ENCODE measurements at regions of chr3 and their contacts with region 1.

Region 1: DNA sequence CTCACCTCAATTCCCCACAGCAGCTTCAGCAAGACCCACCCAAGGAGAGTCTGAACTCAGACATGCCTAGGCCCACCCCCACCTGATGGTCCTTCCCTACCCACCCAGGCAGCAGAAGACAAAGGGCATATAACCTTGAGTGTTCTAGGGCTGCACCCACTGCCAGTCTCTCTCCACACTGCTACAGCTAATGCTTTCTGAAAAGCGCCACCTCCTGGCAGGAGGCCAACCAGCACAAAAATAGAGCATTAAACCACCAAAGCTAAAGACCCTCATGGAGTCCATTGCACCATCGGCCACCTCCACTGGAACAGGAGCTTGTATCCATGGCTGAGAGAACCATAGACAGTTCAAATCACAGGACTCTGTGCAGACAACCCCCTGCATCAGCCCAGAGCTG is 11.3 kb upstream of the RPL39L start:
- DNase-seq: no peak
- ATAC-seq: peak; percentile 82
- H3K4me3 ChIP-seq: no peak overlapping the region
- H3K27ac ChIP-seq: no peak overlapping the region
- H3K4me1 ChIP-seq: no peaks in the 10 kb centered on the region; the same call in 1 of the 2 replicates
- H3K27me3 ChIP-seq: no peaks in the 10 kb centered on the region; a peak in 1 of 4 replicates
- CTCF ChIP-seq: peak; percentile 41 to 45 (median 43); a peak in 5 of 6 replicates
- EP300 ChIP-seq: no peak
- POLR2A ChIP-seq: no peak
- RAD21 ChIP-seq: peak; percentile 50

Region 2: DNA sequence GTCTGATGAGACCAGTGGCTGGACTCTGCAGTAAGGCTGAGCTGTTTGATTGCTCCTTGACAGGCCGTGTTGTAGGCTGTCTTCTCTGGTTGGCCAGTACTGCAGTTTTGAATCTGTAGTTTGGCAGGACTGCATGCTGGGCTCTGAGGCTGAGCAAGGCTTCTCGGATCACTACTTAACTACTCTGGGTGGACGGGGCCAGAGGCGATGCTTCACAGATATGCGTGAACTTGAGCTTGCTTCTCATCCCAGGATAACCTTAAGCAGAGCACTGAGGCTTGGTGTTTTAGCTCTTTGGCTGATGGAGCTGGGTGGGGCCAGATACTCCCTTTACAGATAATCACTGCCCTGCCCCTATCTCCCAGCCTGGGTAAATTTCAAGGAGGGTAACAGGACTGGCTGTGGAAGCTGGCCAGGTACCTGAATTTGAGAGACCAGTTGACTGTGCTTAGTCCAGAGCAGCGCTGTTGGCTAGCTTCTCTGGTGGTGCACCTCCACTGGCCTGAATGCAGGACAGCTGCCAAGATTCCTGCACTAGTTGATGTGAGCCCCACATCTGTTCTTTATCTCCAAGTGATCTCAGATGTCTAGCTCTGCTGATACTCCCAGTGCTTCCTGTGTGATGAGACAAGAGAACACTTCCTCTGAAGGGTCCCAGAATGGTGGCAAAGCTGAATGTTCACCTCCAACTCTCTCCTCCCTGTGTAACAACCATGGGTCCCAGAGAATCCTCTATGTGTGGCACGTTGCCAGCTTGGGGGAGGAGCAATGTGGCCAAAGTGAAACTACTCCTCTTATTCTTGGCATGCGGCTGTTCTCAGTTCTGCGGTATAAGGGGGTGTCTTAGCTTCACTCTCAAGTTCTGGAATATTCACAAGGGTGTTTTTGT is 49.2 kb before region 1 on chr3:
- CTCF ChIA-PET with region 1: interaction called, 11 read pairs
- POLR2A ChIA-PET with region 1: no interaction called
- RAD21 ChIA-PET with region 1: interaction called, 3 read pairs
- SMC1A ChIA-PET with region 1: interaction called, 5 read pairs
- in situ Hi-C with region 1: no loop called
- intact Hi-C with region 1: no loop called
- DNase-seq: no peak
- ATAC-seq: peak; percentile 65
- H3K4me3 ChIP-seq: no peak overlapping the region
- H3K27ac ChIP-seq: no peak overlapping the region
- H3K4me1 ChIP-seq: 0 out of 2 replicates have a peak, but pooled peaks cover 5% of the 10 kb centered on the region
- H3K27me3 ChIP-seq: no peaks in the 10 kb centered on the region
- CTCF ChIP-seq: no peak
- EP300 ChIP-seq: no peak
- POLR2A ChIP-seq: no peak
- RAD21 ChIP-seq: no peak

Region 3: GRCh38 chr3:187120326-187120725 is 30.3 kb before region 1 on chr3:
- CTCF ChIA-PET with region 1: interaction called, 160 read pairs
- POLR2A ChIA-PET with region 1: interaction called, 4 read pairs
- RAD21 ChIA-PET with region 1: interaction called, 53 read pairs
- SMC1A ChIA-PET with region 1: interaction called, 81 read pairs
- in situ Hi-C with region 1: no loop called
- intact Hi-C with region 1: no loop called
- DNase-seq: no peak
- ATAC-seq: peak; percentile 45
- H3K4me3 ChIP-seq: no peak overlapping the region
- H3K27ac ChIP-seq: no peak overlapping the region
- H3K4me1 ChIP-seq: peaks cover 6% of the 10 kb centered on the region; the same call in 1 of the 2 replicates
- H3K27me3 ChIP-seq: no peaks in the 10 kb centered on the region
- CTCF ChIP-seq: no peak
- EP300 ChIP-seq: no peak
- POLR2A ChIP-seq: no peak
- RAD21 ChIP-seq: no peak

Region 4: GRCh38 chr3:187130346-187131066 is 20.1 kb before region 1 on chr3:
- CTCF ChIA-PET with region 1: interaction called, 11 read pairs
- POLR2A ChIA-PET with region 1: no interaction called
- RAD21 ChIA-PET with region 1: interaction called, 3 read pairs
- SMC1A ChIA-PET with region 1: interaction called, 5 read pairs
- in situ Hi-C with region 1: no loop called
- intact Hi-C with region 1: no loop called
- DNase-seq: no peak
- ATAC-seq: peak; percentile 96
- H3K4me3 ChIP-seq: no peak overlapping the region
- H3K27ac ChIP-seq: peak overlapping the region; percentile 47
- H3K4me1 ChIP-seq: peaks cover 13% of the 10 kb centered on the region
- H3K27me3 ChIP-seq: no peaks in the 10 kb centered on the region
- CTCF ChIP-seq: no peak
- EP300 ChIP-seq: no peak
- POLR2A ChIP-seq: no peak
- RAD21 ChIP-seq: no peak

Region 5: DNA sequence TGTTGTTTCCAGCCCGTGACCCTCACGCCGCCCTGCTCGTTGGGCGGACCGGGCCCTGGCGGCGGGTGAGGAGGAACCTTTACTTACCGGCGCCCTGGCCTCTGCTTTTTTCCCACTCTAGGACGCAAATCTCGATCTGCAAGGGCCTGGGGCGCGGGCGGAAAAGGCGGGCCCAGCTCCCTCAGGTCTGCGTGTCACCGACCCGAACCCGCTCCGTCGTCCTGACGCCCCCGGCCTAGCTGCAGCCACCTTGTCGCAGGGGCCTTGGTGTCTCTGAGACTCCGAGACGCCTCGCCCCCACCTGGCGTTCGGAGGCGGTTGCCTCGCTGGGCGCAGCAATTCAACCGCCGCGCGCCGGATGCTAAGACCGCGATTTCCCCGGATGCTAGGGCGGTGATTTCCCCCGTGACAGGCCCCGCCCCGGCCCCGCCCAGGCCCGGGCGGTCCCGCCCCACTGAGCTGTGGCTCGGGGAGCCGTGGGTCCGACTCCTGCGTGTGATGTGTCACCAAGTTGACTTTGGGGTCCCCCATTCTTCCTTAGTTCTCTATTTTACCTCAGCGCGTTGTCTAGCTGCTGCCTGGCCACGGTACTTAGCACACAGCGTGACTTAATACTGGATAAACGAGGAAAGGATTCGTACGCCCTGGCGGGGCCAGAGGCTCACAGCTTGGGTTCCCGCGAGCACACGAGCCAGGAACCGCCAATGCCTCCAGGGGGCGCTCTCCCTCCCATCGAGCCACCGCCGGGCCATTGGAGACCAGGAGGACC is 11.3 kb before region 1 on chr3 and contains the start of gene RPL39L:
- CTCF ChIA-PET with region 1: interaction called, 59 read pairs
- POLR2A ChIA-PET with region 1: no interaction called
- RAD21 ChIA-PET with region 1: interaction called, 24 read pairs
- SMC1A ChIA-PET with region 1: interaction called, 24 read pairs
- in situ Hi-C with region 1: no loop called
- intact Hi-C with region 1: no loop called
- DNase-seq: peak; percentile 64
- ATAC-seq: peak; percentile 99
- H3K4me3 ChIP-seq: peak within 1 kb of the TSS; percentile 63
- H3K27ac ChIP-seq: peak within 1 kb of the TSS; percentile 92
- H3K4me1 ChIP-seq: peaks cover 7% of the 10 kb centered on the region; the same call in 1 of the 2 replicates
- H3K27me3 ChIP-seq: no peaks in the 10 kb centered on the region
- CTCF ChIP-seq: peak; percentile 80 to 86 (median 84)
- EP300 ChIP-seq: no peak
- POLR2A ChIP-seq: peak; percentile 96
- RAD21 ChIP-seq: no peak
- polyA plus RNA-seq, gene RPL39L: 12.5 to 33.7 TPM

Region 6: DNA sequence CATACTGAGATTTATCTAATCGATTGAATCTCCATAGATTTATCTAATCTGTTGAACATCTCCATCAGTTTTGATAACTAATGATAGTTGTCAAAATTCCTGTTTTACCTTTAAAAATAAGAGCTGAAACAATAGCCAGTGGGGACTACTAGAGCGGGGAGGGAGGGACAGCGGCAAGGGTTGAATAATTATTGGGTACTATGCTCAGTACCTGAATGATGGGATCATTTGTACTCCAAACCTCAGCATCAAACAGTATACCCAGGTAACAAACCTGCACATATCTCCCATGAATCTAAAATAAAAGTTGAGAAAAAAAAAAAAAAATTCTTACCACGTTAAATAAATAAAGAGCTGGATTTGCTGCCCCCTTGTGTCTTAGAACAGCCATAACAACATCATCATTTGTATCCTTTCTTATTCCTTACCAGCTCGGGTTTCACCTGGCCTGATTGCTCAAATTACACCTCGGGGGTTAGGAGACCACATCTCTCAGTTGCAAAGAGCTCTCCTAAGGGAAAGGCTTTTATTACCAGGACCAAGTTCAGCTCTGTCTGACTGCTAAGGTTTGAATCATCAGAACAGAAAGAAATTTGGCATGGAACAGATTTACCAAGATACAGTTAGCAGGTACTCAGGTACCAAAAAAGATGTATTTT is 14.4 kb after region 1 on chr3:
- CTCF ChIA-PET with region 1: interaction called, 45 read pairs
- POLR2A ChIA-PET with region 1: no interaction called
- RAD21 ChIA-PET with region 1: interaction called, 12 read pairs
- SMC1A ChIA-PET with region 1: interaction called, 23 read pairs
- in situ Hi-C with region 1: no loop called
- intact Hi-C with region 1: no loop called
- DNase-seq: no peak
- ATAC-seq: peak; percentile 76
- H3K4me3 ChIP-seq: no peak overlapping the region
- H3K27ac ChIP-seq: no peak overlapping the region
- H3K4me1 ChIP-seq: no peaks in the 10 kb centered on the region
- H3K27me3 ChIP-seq: no peaks in the 10 kb centered on the region; a peak in 1 of 4 replicates
- CTCF ChIP-seq: peak; percentile 52 to 60 (median 57); a peak in 5 of 6 replicates
- EP300 ChIP-seq: no peak
- POLR2A ChIP-seq: no peak
- RAD21 ChIP-seq: peak; percentile 74

Region 7: DNA sequence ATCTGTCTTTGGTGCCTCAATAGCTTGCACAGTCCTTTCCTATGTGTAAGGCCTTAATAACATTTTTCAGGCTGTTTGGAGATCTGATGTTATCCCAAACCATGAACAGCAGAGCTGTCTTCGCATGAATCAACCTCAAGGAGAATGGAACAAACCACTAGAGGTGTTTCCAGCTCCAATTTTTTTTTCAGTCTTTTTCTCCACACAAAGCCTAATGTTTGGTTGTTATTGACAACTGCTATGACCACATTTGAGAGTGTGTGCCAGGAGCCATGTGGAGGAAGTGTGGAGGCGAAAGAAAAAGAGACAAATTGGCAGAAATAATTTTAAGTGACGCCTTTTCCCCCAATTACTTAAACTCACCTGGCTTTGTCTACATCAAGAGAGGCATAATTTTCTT is 256.3 kb after region 1 on chr3:
- CTCF ChIA-PET with region 1: no interaction called
- POLR2A ChIA-PET with region 1: no interaction called
- RAD21 ChIA-PET with region 1: no interaction called
- SMC1A ChIA-PET with region 1: no interaction called
- in situ Hi-C with region 1: no loop called
- intact Hi-C with region 1: no loop called
- DNase-seq: no peak
- ATAC-seq: no peak
- H3K4me3 ChIP-seq: no peak overlapping the region
- H3K27ac ChIP-seq: no peak overlapping the region
- H3K4me1 ChIP-seq: no peaks in the 10 kb centered on the region
- H3K27me3 ChIP-seq: no peaks in the 10 kb centered on the region; a peak in 1 of 4 replicates
- CTCF ChIP-seq: no peak
- EP300 ChIP-seq: no peak
- POLR2A ChIP-seq: no peak
- RAD21 ChIP-seq: no peak

Region 8: GRCh38 chr3:187430576-187430975 is 280.0 kb after region 1 on chr3:
- CTCF ChIA-PET with region 1: no interaction called
- POLR2A ChIA-PET with region 1: no interaction called
- RAD21 ChIA-PET with region 1: no interaction called
- SMC1A ChIA-PET with region 1: no interaction called
- in situ Hi-C with region 1: no loop called
- intact Hi-C with region 1: no loop called
- DNase-seq: no peak
- ATAC-seq: no peak
- H3K4me3 ChIP-seq: no peak overlapping the region
- H3K27ac ChIP-seq: no peak overlapping the region
- H3K4me1 ChIP-seq: no peaks in the 10 kb centered on the region
- H3K27me3 ChIP-seq: no peaks in the 10 kb centered on the region
- CTCF ChIP-seq: peak in 2 of 3 experiments; percentile 9 to 37; a peak in 2 of 6 replicates
- EP300 ChIP-seq: no peak
- POLR2A ChIP-seq: no peak
- RAD21 ChIP-seq: no peak

Region 9: GRCh38 chr3:187738331-187739093 is 587.9 kb after region 1 on chr3:
- CTCF ChIA-PET with region 1: no interaction called
- POLR2A ChIA-PET with region 1: no interaction called
- RAD21 ChIA-PET with region 1: no interaction called
- SMC1A ChIA-PET with region 1: no interaction called
- in situ Hi-C with region 1: no loop called
- intact Hi-C with region 1: no loop called
- DNase-seq: no peak
- ATAC-seq: peak; percentile 76
- H3K4me3 ChIP-seq: peak overlapping the region; percentile 50; the same call in 1 of the 2 replicates
- H3K27ac ChIP-seq: no peak overlapping the region
- H3K4me1 ChIP-seq: no peaks in the 10 kb centered on the region; the same call in 1 of the 2 replicates
- H3K27me3 ChIP-seq: peaks cover 12 to 19% of the 10 kb centered on the region in 2 experiments
- CTCF ChIP-seq: peak; percentile 77 to 84 (median 84)
- EP300 ChIP-seq: no peak
- POLR2A ChIP-seq: no peak
- RAD21 ChIP-seq: peak; percentile 88